A549 (cell line): ENCODE measurements at regions of chr5 and their contacts with region 1.

Region 1: GRCh38 chr5:73591102-73591695 is 25.7 kb downstream of the UTP15 start:
- DNase-seq: peak; percentile 64 to 88
- ATAC-seq: peak; percentile 83 to 90
- H3K4me3 ChIP-seq: no peak overlapping the region
- H3K27ac ChIP-seq: peak overlapping the region; percentile 58 to 70
- H3K4me1 ChIP-seq: peaks cover 27% of the 10 kb centered on the region
- CTCF ChIP-seq: peak; percentile 97
- EP300 ChIP-seq: no peak
- POLR2A ChIP-seq: no peak
- RAD21 ChIP-seq: peak; percentile 97 to 98

Region 2: DNA sequence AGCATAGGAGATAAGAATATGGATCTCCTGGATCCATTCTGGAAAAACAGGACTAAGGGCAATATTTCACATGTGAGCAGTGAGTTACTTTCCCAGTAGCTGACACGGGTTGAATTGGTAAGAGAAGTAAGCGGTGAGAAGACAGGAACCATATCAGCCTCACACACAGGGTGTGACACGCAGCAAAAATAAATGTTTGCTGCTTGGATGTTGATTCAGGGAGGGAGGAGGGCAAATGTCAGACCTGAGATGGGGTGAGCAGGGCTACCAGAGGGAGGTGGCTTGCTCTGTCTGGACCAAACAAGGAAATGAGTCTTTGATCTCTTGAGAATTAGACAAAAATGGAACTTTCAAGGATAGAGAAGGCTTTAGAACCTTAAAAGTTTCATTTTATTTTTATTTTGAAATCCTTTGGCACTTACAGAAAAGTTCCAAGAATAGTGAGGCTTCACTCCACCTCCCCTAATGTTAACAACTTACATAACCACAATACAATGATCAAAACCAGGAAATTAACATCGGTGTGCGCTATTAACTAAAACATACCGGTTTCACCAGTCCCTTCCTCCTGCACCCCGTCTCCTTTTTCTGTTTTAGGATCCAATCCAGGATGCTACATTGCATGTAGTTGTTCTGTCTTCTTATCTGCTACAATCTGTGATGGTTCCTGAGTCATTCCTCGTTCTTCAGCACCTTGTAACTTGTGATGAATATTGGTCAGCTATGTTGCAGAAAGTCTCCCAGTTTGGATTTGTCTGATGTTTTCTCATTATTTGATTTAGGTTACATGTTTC is 14.2 kb after region 1 on chr5:
- CTCF ChIA-PET with region 1: interaction called, 30 read pairs
- POLR2A ChIA-PET with region 1: no interaction called
- DNase-seq: peak; percentile 31 to 84
- ATAC-seq: peak; percentile 89 to 96
- H3K4me3 ChIP-seq: no peak overlapping the region; the same call in 2 of the 3 replicates
- H3K27ac ChIP-seq: peak overlapping the region; percentile 80 to 82
- H3K4me1 ChIP-seq: peaks cover 39% of the 10 kb centered on the region
- CTCF ChIP-seq: no peak
- EP300 ChIP-seq: 0 out of 5 replicates have a peak, but pooled peaks of 1 of the 2 experiments have one; percentile 12
- POLR2A ChIP-seq: no peak
- RAD21 ChIP-seq: no peak

Region 3: DNA sequence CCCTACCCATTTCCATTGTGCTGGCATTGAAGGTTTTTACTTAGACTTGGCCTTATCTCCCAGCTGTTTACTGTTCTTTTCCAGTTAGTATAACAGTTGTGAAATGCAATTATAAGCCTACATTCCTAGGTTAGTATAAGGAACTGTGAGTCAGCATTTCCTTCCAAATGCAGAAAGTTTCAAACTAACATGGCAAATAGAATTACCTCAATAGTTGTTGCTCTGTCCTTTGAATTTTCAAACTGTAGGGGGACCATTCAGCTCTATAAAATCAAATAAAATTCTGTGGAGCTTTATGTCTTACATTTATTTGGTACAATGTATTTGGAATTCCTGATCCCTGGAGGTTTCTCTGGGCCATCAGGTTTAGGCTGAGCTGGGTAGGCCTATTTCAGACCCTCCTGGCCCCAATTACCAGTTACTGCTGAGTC is 82.0 kb after region 1 on chr5:
- CTCF ChIA-PET with region 1: interaction called, 21 read pairs
- POLR2A ChIA-PET with region 1: no interaction called
- DNase-seq: peak in 1 of 2 experiments; percentile 71
- ATAC-seq: peak; percentile 64 to 75
- H3K4me3 ChIP-seq: no peak overlapping the region
- H3K27ac ChIP-seq: peak overlapping the region; percentile 85 to 92
- H3K4me1 ChIP-seq: peaks cover 76% of the 10 kb centered on the region
- CTCF ChIP-seq: no peak
- EP300 ChIP-seq: 0 out of 5 replicates have a peak, but pooled peaks of 1 of the 2 experiments have one; percentile 33
- POLR2A ChIP-seq: no peak
- RAD21 ChIP-seq: no peak

Region 4: DNA sequence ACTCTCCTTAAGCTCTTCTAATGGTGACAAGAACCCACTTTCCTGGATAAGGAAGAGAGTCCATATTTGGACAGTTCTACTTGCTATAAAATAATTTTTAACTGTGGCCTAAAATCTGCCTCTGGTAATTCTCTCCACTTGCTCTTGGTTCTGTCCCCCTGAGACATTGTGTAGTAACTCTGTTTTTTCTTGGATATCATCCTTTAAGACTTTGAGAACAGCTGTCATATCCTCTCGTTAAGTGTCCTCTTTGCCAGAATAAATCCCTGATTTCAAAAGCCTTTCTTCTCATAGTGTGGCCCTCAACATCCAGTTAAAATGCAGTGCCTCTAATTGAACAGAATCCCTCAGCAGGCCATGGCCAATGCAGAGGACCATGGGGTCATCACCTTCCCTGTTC is 136.3 kb after region 1 on chr5:
- CTCF ChIA-PET with region 1: interaction called, 10 read pairs
- POLR2A ChIA-PET with region 1: no interaction called
- DNase-seq: no peak
- ATAC-seq: no peak
- H3K4me3 ChIP-seq: no peak overlapping the region
- H3K27ac ChIP-seq: peak overlapping the region in 1 of 2 experiments; percentile 65; a peak in 1 of 6 replicates
- H3K4me1 ChIP-seq: peaks cover 51% of the 10 kb centered on the region
- CTCF ChIP-seq: no peak
- EP300 ChIP-seq: no peak
- POLR2A ChIP-seq: no peak
- RAD21 ChIP-seq: no peak

Region 5: DNA sequence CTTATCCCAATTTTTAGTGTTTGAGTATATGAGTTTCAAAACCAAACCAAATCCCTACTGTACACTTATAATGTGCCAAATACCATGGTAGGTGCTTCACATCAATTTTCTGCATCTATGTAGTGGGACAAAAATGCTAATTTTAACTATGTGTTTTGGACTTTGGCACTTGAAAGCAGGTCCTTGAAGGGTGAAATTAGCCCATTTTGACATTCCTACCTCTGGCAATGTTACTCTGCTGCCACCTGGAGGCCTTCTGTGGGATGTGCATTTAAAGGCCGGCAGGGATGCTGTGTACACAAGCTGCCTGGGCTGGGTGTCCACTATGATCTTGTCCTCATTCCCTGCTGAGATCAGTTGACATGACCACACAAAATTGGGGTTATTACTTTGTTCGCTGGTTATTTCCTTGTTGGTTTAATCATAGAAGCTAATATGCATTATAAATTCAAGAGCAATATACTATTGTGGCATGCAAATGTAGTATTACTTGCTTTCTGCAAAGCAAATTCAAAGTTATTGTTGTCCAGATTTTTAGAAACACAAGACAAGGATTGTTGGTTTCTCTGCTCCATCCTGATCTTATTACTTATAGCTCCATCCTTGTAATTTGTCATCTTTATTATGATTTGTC is 201.6 kb after region 1 on chr5:
- CTCF ChIA-PET with region 1: interaction called, 315 read pairs
- POLR2A ChIA-PET with region 1: interaction called, 5 read pairs
- DNase-seq: peak; percentile 43 to 81
- ATAC-seq: peak; percentile 54 to 73
- H3K4me3 ChIP-seq: no peak overlapping the region
- H3K27ac ChIP-seq: peak overlapping the region; percentile 91 to 94; a peak in 5 of 6 replicates
- H3K4me1 ChIP-seq: peaks cover 73% of the 10 kb centered on the region
- CTCF ChIP-seq: peak; percentile 97
- EP300 ChIP-seq: no peak
- POLR2A ChIP-seq: no peak
- RAD21 ChIP-seq: peak; percentile 99

Region 6: GRCh38 chr5:73892806-73893205 is 301.6 kb after region 1 on chr5:
- CTCF ChIA-PET with region 1: interaction called, 12 read pairs
- POLR2A ChIA-PET with region 1: no interaction called
- DNase-seq: no peak
- ATAC-seq: no peak
- H3K4me3 ChIP-seq: no peak overlapping the region
- H3K27ac ChIP-seq: no peak overlapping the region
- H3K4me1 ChIP-seq: no peaks in the 10 kb centered on the region
- CTCF ChIP-seq: no peak
- EP300 ChIP-seq: no peak
- POLR2A ChIP-seq: no peak
- RAD21 ChIP-seq: no peak